HEK293 (cell line): ENCODE measurements at regions of chr17 and their contacts with region 1.

Region 1: DNA sequence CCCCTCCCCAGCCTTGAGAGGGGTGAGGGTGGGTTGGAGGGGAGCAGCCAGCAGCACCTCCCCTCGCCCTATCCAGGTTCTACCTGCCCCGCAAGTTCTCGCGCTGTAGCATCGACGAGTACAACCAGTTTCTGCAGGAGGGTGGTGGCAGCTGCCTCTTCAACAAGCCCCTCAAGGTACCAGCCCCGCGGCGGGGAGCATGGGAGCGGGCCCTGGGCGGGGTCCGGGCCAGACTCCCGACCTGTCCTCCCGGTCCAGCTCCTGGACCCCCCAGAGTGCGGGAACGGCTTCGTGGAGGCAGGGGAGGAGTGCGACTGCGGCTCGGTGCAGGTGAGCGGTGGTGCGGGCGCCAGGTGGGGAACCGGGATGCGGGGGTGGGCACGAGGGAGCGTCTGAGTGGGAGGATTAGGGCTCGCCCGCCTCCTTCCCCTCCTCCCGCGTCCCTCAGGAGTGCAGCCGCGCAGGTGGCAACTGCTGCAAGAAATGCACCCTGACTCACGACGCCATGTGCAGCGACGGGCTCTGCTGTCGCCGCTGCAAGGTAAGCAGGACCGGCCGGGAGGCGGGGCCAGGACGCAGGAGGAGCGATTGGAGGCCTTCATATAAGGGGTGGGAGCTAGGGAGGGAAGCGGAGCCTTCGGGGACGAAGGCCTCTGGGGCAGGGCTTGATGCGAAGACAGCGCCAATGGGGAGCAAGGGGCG is 16.5 kb downstream of the ADAM11 start:
- H3K4me3 ChIP-seq: peak overlapping the region; percentile 58
- H3K27ac ChIP-seq: peak overlapping the region; percentile 25; the same call in 1 of the 2 replicates
- H3K4me1 ChIP-seq: no peaks in the 10 kb centered on the region
- CTCF ChIP-seq: peak; percentile 36; the same call in 1 of the 2 replicates

Region 2: GRCh38 chr17:44636562-44636961 is 138.7 kb before region 1 on chr17:
- CTCF ChIA-PET with region 1: no interaction called
- POLR2A ChIA-PET with region 1: no interaction called
- H3K4me3 ChIP-seq: no peak overlapping the region
- H3K27ac ChIP-seq: no peak overlapping the region
- H3K4me1 ChIP-seq: no peaks in the 10 kb centered on the region
- CTCF ChIP-seq: peak; percentile 63; the same call in 1 of the 2 replicates

Region 3: DNA sequence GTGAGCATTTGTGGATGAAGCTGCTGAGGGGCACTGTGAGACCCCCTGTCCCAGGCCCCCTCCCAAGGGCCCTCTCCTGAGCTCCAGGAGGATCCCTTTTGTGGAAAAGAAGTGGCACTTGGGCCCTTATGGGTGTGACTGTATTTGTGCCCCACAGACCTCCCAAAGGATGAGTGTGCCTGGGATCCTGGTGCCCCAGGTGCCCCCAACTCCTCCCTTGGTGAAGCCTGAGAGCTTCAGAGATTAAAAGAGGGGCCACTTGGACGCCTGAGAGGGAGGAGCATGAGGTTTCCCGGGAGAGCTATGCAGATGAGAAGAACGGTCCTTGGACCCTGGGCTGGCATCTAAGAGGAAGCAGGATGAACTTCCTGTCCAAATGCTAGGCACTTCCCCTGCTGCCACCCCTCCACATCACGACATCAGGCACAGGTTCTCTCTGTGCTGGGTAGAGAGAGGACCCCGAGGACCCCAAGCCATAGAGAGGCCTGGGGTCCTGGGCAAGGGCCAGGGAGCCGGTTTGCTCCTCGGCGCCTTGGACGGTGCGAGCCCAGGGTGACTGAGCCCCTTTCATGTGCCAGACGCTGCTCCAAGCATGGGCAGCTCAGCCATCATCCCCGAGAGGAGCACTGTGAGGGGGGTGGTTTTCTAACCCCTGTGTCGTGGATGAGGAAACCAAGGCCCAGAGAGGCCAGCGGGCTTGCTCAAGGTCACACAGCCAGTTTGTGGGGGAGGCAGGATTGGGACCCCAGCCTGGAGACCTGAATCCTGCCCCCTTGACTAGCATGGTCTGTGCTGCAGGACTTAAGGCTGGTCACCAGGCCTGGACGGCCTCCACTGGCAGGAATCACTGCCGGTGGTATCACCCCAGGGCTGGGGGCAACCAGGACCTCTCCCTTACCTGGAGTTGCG is 22.1 kb before region 1 on chr17:
- CTCF ChIA-PET with region 1: interaction called, 3 read pairs
- POLR2A ChIA-PET with region 1: interaction called, 11 read pairs
- H3K4me3 ChIP-seq: no peak overlapping the region
- H3K27ac ChIP-seq: no peak overlapping the region
- H3K4me1 ChIP-seq: no peaks in the 10 kb centered on the region
- CTCF ChIP-seq: no peak

Region 4: GRCh38 chr17:44794851-44795413 is 19.6 kb after region 1 on chr17:
- CTCF ChIA-PET with region 1: interaction called, 12 read pairs
- POLR2A ChIA-PET with region 1: interaction called, 6 read pairs
- H3K4me3 ChIP-seq: no peak overlapping the region
- H3K27ac ChIP-seq: no peak overlapping the region
- H3K4me1 ChIP-seq: no peaks in the 10 kb centered on the region
- CTCF ChIP-seq: no peak

Region 5: DNA sequence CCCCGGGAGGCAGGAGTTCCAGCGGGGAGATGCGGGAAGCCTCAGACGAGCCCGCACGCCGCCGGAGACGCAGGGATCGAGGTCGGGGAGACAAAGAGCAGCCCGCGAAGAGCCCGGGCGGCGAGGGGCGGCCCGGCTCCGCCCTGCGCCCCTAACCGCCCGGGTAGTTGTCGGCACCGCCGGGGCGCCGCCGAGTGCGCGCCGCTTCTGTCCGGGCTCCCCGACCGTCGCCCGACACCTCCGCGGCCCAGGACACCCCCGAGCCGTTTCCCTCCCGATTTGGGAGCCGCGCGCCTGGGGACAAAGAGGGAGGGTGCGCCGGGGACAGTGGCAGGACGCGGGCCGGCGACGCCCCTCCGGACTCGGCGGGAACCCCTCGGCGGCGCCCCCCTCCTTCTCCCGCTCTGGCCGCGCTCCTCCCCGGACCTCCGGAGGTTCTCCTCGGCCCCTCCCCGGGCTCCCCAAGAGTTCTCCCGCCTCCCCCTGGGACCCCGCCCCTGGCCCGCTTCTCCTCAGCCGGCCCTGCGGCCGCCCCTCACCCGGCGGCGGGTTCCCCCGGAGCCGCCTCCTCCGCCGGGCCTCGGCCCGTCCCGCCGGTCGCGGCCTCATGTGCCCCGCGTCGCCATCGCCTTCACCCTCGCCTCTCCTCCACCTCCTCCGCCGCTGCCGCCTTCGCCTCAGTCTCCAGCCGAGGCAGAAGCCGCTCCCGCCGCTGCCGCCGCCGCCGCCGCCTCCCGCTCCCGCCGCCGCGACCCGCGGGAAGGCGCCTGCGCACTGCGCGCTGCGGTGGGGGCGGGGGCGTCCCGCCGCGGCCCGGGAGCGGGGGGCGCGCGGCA is 54.5 kb after region 1 on chr17 and contains the start of gene GJC1:
- CTCF ChIA-PET with region 1: interaction called, 40 read pairs
- POLR2A ChIA-PET with region 1: interaction called, 9 read pairs
- H3K4me3 ChIP-seq: peak within 1 kb of the TSS; percentile 78
- H3K27ac ChIP-seq: peak within 1 kb of the TSS; percentile 93
- H3K4me1 ChIP-seq: peaks cover 14% of the 10 kb centered on the region
- CTCF ChIP-seq: no peak

Region 6: DNA sequence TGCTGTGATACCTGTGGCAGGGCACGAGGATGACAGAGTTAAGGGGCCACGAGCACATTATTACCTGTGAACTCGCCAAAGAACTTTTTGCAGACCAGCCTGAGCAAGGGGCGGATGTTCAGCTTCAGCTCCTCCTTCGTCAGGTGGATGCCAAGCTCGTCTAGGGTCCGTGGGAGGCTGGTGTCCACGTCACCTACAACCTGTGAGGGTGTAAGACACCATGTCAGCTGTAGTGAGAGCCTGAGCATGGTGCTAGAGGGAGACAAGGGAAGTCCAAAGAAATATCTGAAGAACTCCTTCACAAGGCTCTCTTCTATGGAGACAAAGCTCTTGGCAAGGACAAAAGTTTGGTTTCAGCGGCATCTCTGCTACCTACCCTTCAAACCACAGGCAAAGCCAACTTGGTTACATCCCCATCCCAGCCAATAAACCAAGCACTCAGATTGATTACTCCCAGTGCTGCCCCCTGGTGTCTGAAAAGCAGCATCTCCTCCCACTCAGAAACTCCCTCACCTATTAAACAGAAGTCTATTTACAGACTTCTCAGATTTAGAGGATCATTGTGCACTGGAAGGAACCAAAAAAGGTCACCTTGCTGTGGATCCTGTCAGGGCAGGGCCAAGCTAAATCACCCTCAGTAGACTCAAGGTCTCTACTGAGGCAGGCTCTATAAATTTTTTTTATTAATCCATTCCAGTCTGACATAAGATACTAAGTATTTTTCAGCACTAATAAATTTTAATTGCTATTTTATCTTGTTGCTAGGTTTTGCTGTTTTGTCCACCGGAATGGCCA is 89.8 kb after region 1 on chr17:
- CTCF ChIA-PET with region 1: interaction called, 461 read pairs
- POLR2A ChIA-PET with region 1: interaction called, 5 read pairs
- H3K4me3 ChIP-seq: no peak overlapping the region
- H3K27ac ChIP-seq: no peak overlapping the region
- H3K4me1 ChIP-seq: no peaks in the 10 kb centered on the region
- CTCF ChIP-seq: peak; percentile 63